Dendritic cell treated with granulocyte-macrophage colony-stimulating factor and Interleukin-4, amounts not matched to agents 40 ng/mL and 50 ng/mL, for 4 days (primary cell): ENCODE measurements at regions of chr5 and their contacts with region 1.

Region 1: DNA sequence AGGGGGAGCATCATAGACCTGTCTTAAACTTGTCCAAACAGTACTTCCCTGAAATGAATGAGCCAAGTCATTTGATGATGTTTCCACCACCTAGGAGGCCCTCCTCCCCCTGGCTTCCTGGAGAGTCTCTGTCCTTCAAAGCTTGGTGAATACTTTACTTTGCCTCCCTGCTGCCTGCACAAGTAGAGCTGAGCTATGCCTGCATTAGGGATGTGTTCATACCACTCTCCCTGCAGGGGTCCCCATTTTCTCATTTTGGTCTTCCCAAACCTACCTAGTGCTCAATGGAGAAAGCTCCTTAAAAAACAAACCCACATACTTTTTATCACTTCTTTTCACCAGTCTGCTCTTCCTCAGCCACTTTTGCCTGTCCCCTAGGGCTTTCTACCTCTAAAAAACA is 7.7 kb downstream of the CCNI2 start:
- H3K4me3 Mint-ChIP-seq: no peak overlapping the region
- H3K27ac Mint-ChIP-seq: no peak overlapping the region
- H3K4me1 Mint-ChIP-seq: no peaks in the 10 kb centered on the region
- H3K27me3 Mint-ChIP-seq: peaks cover 13% of the 10 kb centered on the region

Region 2: GRCh38 chr5:132662925-132663770 is 91.8 kb before region 1 on chr5:
- intact Hi-C with region 1: no loop called
- H3K4me3 Mint-ChIP-seq: no peak overlapping the region
- H3K27ac Mint-ChIP-seq: no peak overlapping the region
- H3K4me1 Mint-ChIP-seq: peaks cover 5% of the 10 kb centered on the region
- H3K27me3 Mint-ChIP-seq: peaks cover 2% of the 10 kb centered on the region

Region 3: GRCh38 chr5:132820162-132820754 is 65.3 kb after region 1 on chr5:
- intact Hi-C with region 1: loop called (anchors 1 kb)
- H3K4me3 Mint-ChIP-seq: peak overlapping the region; percentile 14
- H3K27ac Mint-ChIP-seq: no peak overlapping the region
- H3K4me1 Mint-ChIP-seq: peaks cover 21% of the 10 kb centered on the region
- H3K27me3 Mint-ChIP-seq: peaks cover 71% of the 10 kb centered on the region

Region 4: DNA sequence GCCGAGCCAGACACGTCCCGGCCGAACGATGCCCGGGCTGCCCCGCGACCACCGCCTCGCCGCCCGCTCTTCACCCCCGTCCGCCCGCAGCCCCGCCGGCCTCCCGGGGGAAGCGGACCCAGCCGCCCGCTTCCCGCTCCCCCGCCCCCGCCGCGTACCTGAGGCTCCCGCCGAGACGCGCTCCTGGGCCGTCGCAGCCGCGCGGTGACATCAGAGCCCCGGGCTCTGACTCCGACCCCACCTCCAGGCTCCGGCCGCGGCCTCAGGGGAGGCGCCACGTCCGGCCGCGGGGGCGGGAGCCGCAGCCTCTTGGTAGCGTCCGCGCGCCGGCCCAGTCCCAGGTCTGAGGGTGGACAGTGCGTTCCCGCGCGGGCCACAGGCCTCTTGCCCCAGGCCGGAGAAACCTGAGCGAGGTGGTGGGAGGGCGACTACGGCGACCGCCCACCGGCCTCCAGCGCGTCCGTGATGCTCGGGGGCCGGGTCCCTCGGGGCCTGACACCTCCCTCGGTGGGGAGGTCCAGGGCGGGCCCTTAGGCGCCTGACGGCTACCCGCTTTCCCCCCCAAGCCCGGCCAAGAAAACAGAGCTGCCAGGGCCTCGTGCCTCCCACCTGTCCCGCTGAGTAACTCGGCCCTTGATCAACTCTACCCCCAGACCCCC is 75.6 kb after region 1 on chr5 and contains the start of gene SHROOM1:
- intact Hi-C with region 1: no loop called
- H3K4me3 Mint-ChIP-seq: peak within 1 kb of the TSS; percentile 96
- H3K27ac Mint-ChIP-seq: peak within 1 kb of the TSS; percentile 77
- H3K4me1 Mint-ChIP-seq: peaks cover 28% of the 10 kb centered on the region
- H3K27me3 Mint-ChIP-seq: peaks cover 63% of the 10 kb centered on the region